ENCODE measurements at regions of chr4 and their contacts with region 1.

Region 1: DNA sequence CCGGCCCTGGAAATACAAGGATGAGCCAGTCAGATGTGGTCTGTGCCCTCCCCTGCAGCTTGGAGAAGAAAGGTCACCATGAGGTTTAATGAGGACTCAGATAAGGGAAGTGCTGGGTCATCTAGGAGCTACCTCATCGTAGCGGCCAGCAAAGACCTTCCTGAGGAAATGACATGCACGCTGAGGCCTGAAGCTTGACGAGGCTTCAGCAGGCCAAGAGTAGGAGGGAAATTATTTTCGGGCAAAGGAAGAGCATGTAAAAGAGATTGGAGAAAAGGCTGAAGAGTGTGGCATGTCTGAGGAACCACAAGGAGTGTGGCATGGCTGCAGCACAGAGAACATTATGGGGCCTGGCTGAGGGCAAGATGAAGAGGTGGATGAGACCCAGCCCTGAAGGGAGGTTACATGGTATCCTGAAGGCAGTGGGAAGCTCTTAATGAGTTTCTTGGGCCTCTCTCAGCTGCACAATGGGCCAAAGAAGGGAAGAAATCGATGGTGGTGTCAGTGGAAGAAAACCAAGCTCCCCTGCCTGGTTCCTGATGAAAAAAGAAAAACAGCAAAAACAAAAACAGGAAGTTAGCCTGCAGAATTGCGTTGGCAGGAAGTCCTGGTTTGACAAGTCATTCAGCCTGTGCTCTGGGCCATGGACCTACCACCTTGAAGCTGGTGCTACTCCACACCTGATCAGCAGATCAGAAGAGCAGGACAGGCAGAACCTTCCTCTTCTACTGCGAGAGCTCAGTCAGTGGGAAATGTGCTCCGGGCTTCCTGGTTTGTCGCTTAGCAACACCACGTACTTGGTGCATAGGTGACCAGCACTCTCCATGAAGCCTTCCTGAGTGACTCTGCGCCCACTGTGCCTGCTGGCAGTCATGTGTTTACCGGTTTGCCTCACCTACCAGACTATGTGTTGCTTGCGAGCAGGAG is 134.5 kb upstream of the KLF3 start:
- DNase-seq: peak; percentile 89 to 95 (median 94)
- H3K4me3 ChIP-seq: peak overlapping the region in 1 of 3 experiments; percentile 23
- H3K4me3 Mint-ChIP-seq: peak overlapping the region; percentile 39 to 78
- H3K27ac ChIP-seq: peak overlapping the region; percentile 94 to 99
- H3K27ac Mint-ChIP-seq: peak overlapping the region; percentile 99 to 100 (median 99)
- H3K4me1 ChIP-seq: peaks cover 59 to 84% of the 10 kb centered on the region in 2 donors
- H3K4me1 Mint-ChIP-seq: peaks cover 79% of the 10 kb centered on the region
- H3K27me3 ChIP-seq: no peaks in the 10 kb centered on the region
- H3K27me3 Mint-ChIP-seq: peaks cover 0 to 10% (median 2%) of the 10 kb centered on the region in 3 donors
- CTCF ChIP-seq: no peak

Region 2: DNA sequence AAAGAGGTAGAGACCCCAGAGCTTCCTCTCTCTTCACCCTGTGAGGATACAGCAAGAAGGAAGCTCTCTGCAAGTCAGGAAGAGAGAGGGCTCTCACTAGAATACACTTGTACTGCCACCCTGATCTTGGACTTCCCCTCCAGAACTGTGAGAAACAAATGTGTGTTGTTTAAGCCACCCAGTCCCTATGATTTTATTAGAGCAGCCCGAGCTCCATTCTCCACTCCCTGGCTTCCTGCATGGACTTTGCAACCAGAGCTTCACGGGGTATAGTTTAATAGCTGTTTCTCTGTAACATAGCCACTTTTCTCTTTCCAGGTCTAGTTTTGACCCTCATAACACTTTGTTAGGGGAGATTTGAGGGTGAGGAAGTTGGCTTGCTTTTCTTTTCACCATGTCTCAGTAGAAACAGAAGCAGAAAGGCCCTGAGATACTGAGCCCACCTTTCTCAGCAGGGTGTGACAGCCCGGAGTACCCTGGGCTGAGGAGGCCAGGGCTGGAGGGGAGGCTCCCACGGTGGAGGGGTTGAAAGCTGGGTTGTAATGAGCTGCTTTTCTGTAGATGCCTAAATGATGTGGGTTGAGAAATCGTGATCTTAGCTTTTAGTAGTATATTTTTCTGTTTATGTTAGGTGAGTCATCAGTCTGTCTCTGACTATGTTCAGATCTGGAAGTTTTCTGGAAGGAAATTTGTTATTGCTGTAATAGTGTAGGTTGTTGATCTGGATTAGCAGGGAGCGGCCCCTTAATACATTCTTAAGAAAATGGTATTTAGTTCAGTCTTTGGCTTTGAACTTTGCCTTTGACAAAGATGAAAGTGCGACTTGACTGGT is 450.6 kb before region 1 on chr4:
- intact Hi-C with region 1: loop called (anchors 10 kb)
- DNase-seq: peak; percentile 55 to 87 (median 82)
- H3K4me3 ChIP-seq: peak overlapping the region in 2 of 3 experiments; percentile 17 to 56
- H3K4me3 Mint-ChIP-seq: peak overlapping the region; percentile 60 to 65
- H3K27ac ChIP-seq: peak overlapping the region; percentile 98 to 99
- H3K27ac Mint-ChIP-seq: peak overlapping the region; percentile 94 to 99 (median 98)
- H3K4me1 ChIP-seq: peaks cover 96 to 99% of the 10 kb centered on the region in 2 donors
- H3K4me1 Mint-ChIP-seq: peaks cover 87% of the 10 kb centered on the region
- H3K27me3 ChIP-seq: no peaks in the 10 kb centered on the region
- H3K27me3 Mint-ChIP-seq: peaks cover 0 to 2% (median 0%) of the 10 kb centered on the region in 3 donors
- CTCF ChIP-seq: no peak

Region 3: DNA sequence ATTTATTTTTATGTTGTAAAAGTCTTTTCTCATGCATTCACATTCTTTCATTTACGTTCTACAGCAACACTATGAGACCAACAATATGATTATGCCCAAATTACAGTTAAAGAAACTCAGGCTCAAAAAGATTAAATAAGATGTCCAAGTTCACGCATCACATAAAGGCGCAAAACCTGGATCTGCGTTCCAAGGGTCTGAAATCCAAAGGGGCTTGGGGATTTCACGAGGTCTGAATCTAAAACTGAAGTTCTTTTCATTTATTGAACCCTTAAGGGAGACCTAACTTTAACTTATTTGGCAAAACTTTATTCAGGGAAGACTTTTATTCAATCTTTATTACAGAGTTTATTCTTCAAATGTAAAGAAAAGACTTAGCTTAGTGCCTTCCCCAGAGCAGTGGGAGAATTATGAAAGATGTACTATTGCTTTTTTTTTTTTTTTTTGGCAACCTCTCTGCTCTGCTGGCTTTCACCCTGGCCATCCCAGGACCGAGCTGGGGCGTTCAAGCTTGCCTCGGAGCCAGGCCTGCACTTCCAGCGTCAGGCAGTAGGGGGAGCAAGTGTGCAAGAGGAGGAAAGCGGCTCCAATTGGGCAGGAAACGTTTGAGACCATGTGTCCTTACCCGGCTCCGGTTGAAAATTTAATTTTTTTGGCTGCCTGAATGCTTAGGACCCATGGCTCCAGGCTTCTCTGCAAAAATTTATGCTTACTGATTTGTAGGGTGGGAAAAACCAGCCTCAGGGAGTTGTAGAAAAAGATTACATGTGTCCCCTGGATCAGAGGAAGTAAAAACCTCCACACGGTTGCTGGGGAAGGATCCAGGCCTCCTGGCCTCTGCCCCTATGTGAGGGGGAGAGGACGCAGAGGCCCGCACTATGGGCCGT is 209.8 kb before region 1 on chr4:
- intact Hi-C with region 1: loop called in 1 of 2 experiments (anchors 10 kb)
- DNase-seq: peak; percentile 76 to 83 (median 77)
- H3K4me3 ChIP-seq: peak overlapping the region in 1 of 3 experiments; percentile 74
- H3K4me3 Mint-ChIP-seq: peak overlapping the region; percentile 68 to 84
- H3K27ac ChIP-seq: peak overlapping the region; percentile 79 to 87
- H3K27ac Mint-ChIP-seq: peak overlapping the region; percentile 87 to 95 (median 91)
- H3K4me1 ChIP-seq: peaks cover 44 to 59% of the 10 kb centered on the region in 2 donors
- H3K4me1 Mint-ChIP-seq: peaks cover 48% of the 10 kb centered on the region
- H3K27me3 ChIP-seq: no peaks in the 10 kb centered on the region
- H3K27me3 Mint-ChIP-seq: peaks cover 0 to 2% (median 0%) of the 10 kb centered on the region in 3 donors
- CTCF ChIP-seq: peak; percentile 99

Region 4: DNA sequence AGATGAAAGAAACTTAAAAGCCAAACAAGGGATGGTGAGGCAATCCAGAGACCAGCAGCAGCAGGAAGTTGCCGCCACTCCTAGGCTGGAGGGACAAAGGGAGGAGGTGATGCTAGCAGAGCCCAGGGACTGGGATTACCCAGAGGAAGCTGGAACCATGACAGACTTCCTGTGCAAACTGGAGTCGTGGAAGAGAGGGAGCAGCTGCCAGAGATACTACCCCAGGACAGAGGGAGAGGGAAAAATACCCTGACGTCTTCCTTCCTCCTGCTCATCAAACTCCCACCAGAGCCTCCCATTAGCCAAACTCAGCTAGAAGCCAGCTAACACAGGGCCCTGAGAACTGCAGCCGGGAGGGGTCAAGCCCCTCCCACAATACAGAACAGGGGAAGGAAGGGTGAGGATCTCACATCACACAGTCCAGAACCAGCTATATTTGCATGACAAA is 33.3 kb after region 1 on chr4:
- intact Hi-C with region 1: no loop called
- DNase-seq: peak; percentile 22 to 66 (median 47)
- H3K4me3 ChIP-seq: peak overlapping the region in 1 of 3 experiments; percentile 48
- H3K4me3 Mint-ChIP-seq: peak overlapping the region in 1 of 2 donors; percentile 39
- H3K27ac ChIP-seq: peak overlapping the region; percentile 36 to 62
- H3K27ac Mint-ChIP-seq: peak overlapping the region; percentile 49 to 85 (median 70)
- H3K4me1 ChIP-seq: peaks cover 14 to 15% of the 10 kb centered on the region in 2 donors
- H3K4me1 Mint-ChIP-seq: peaks cover 18% of the 10 kb centered on the region
- H3K27me3 ChIP-seq: no peaks in the 10 kb centered on the region
- H3K27me3 Mint-ChIP-seq: peaks cover 0 to 2% (median 0%) of the 10 kb centered on the region in 3 donors
- CTCF ChIP-seq: no peak

Region 5: GRCh38 chr4:38582889-38583470 is 53.5 kb after region 1 on chr4:
- intact Hi-C with region 1: loop called in 1 of 2 experiments (anchors 10 kb)
- DNase-seq: peak in 1 of 3 donors; percentile 6
- H3K4me3 ChIP-seq: no peak overlapping the region
- H3K4me3 Mint-ChIP-seq: no peak overlapping the region
- H3K27ac ChIP-seq: no peak overlapping the region
- H3K27ac Mint-ChIP-seq: peak overlapping the region in 6 of 7 donors; percentile 4 to 75 (median 55)
- H3K4me1 ChIP-seq: peaks cover 34 to 43% of the 10 kb centered on the region in 2 donors
- H3K4me1 Mint-ChIP-seq: peaks cover 50% of the 10 kb centered on the region
- H3K27me3 ChIP-seq: no peaks in the 10 kb centered on the region
- H3K27me3 Mint-ChIP-seq: peaks cover 0 to 7% (median 0%) of the 10 kb centered on the region in 3 donors
- CTCF ChIP-seq: no peak

Region 6: DNA sequence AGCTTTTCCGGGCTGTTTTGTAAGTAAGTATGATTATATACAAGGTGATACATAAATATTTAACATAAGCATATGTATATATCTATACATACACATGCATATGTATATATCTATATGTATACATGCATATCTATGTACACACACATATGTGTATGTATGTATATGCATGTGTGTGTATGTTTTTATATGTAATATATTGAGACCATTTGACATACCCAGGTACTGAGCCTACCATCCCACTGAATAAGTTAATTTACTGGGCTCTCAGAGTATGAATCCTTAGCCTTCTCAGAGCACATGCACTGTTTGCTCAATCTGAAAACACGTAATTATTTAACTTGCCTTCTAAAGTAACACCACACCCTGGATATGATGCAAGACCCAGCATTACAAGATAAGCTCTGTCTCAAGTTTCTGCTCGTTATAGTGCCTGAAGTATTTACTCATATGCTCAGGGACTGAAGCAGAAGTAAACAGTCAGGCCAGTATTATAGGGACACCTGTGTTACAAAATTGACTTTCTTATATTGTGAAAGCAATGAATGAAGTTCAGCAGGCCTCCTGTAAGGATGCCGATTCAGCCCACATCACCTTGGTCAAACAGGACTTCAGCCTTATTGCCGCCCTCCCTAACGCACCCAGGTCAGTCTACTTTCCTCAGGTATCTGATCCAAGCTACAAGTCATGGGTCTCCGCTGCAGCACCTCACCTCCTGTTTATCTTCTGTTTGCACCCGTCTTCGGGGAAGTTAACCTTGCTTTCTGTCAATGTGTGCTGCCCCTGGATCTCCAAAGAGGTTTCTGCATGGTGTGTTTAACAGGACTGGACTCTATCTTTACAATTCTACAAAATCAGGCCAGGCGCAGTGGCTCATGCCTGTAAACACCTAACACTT is 91.6 kb after region 1 on chr4:
- intact Hi-C with region 1: loop called in 1 of 2 experiments (anchors 5 kb)
- DNase-seq: peak; percentile 88 to 91 (median 90)
- H3K4me3 ChIP-seq: peak overlapping the region in 1 of 3 experiments; percentile 3
- H3K4me3 Mint-ChIP-seq: no peak overlapping the region
- H3K27ac ChIP-seq: peak overlapping the region; percentile 69 to 74
- H3K27ac Mint-ChIP-seq: peak overlapping the region; percentile 80 to 96 (median 92)
- H3K4me1 ChIP-seq: peaks cover 43 to 56% of the 10 kb centered on the region in 2 donors
- H3K4me1 Mint-ChIP-seq: peaks cover 48% of the 10 kb centered on the region
- H3K27me3 ChIP-seq: no peaks in the 10 kb centered on the region
- H3K27me3 Mint-ChIP-seq: peaks cover 0 to 2% (median 0%) of the 10 kb centered on the region in 3 donors
- CTCF ChIP-seq: no peak

Measured in CD14-positive monocyte (primary cell).